Common myeloid progenitor, CD34-positive (primary cell): ENCODE measurements at regions of chr3 and their contacts with region 1.

Region 1: GRCh38 chr3:112111785-112112402 is 21.2 kb downstream of the GCSAM start:
- DNase-seq: peak; percentile 73 to 86 (median 84)
- H3K4me3 ChIP-seq: no peak overlapping the region
- H3K27ac ChIP-seq: no peak overlapping the region
- H3K4me1 ChIP-seq: peaks cover under 1 to 4% (median 3%) of the 10 kb centered on the region in 4 experiments
- H3K27me3 ChIP-seq: no peaks in the 10 kb centered on the region

Region 2: DNA sequence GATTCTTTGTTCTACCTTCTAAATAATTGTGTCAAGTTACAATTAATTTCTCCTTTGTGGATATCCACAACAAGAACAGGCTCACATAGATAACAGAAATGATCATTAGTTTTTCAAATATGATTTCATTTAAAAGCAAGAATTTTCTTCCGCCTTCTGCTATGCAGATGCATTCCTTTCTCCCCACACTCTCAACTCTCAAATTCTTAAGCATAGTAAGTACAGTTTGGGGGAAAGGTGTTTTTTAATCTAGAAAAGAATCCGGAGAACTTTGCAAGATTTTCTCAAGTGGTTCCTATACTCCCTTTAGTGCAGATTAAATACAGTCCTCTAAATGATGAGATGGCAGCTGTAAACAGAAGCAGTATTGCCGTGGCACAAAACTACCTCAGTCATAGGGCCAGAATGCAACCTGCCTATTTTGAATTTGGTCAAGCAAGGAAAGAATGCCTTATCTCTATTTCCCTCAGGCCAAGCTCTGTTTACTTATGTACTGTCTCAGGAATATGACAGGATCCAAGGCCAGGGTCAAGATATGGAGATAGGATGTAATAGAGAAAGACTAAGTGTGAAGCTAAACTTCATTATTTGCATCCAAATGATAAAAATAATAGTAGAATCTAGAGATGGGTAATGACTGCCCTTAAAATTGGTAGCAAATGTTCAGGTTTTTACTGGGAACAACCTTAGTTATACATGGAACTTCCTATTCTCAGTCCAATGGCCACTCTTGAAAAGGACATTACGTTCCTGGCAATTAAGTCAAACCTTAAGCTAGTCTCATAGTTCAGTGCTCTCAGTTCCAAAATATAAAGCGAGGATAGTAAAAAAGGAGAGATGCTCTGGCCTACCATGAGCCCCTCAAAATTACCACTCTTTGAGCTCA is 330.1 kb before region 1 on chr3:
- CTCF ChIA-PET with region 1: no interaction called
- POLR2A ChIA-PET with region 1: no interaction called
- DNase-seq: no peak
- H3K4me3 ChIP-seq: no peak overlapping the region
- H3K27ac ChIP-seq: no peak overlapping the region
- H3K4me1 ChIP-seq: no peaks in the 10 kb centered on the region
- H3K27me3 ChIP-seq: no peaks in the 10 kb centered on the region

Region 3: GRCh38 chr3:112013058-112013783 is 98.7 kb before region 1 on chr3:
- CTCF ChIA-PET with region 1: no interaction called
- POLR2A ChIA-PET with region 1: no interaction called
- DNase-seq: peak; percentile 65 to 79 (median 74)
- H3K4me3 ChIP-seq: peak overlapping the region in 2 of 7 experiments; percentile 8 to 26
- H3K27ac ChIP-seq: no peak overlapping the region
- H3K4me1 ChIP-seq: peaks cover 0 to 10% (median 2%) of the 10 kb centered on the region in 4 experiments
- H3K27me3 ChIP-seq: no peaks in the 10 kb centered on the region

Region 4: GRCh38 chr3:112128843-112129727 is 17.2 kb after region 1 on chr3:
- CTCF ChIA-PET with region 1: interaction called, 10 read pairs
- POLR2A ChIA-PET with region 1: no interaction called
- DNase-seq: peak; percentile 68 to 95 (median 94)
- H3K4me3 ChIP-seq: peak overlapping the region in 1 of 7 experiments; percentile 29
- H3K27ac ChIP-seq: peak overlapping the region; percentile 60 to 67
- H3K4me1 ChIP-seq: peaks cover 18 to 65% (median 51%) of the 10 kb centered on the region in 4 experiments
- H3K27me3 ChIP-seq: no peaks in the 10 kb centered on the region

Region 5: GRCh38 chr3:112293368-112294321 is 181.8 kb after region 1 on chr3 and contains the start of gene SLC9C1:
- CTCF ChIA-PET with region 1: interaction called, 10 read pairs
- POLR2A ChIA-PET with region 1: no interaction called
- DNase-seq: peak; percentile 80 to 89 (median 86)
- H3K4me3 ChIP-seq: peak within 1 kb of the TSS in 5 of 7 experiments; percentile 42 to 77 (median 55)
- H3K27ac ChIP-seq: peak within 1 kb of the TSS in 1 of 2 experiments; percentile 46
- H3K4me1 ChIP-seq: peaks cover 0 to 18% (median 10%) of the 10 kb centered on the region in 4 experiments
- H3K27me3 ChIP-seq: no peaks in the 10 kb centered on the region

Region 6: DNA sequence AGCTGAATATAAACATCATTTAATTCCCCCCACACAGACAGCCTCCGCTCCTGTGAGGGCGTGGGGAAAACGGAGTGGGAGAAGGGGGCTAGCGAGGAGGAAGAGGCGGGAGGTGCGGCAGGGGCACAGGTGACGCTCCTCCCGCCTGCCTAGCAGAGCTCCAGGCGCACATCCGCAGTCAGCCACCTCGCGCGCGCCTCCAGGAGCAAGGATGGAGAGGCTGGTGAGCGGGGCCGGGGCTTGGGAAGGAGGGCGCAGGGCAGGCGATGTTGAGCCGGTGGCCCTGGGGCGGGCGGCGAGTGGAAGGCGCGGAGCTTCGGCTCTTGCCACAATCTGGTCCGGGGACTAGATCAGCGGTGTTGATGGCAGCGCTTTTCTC is 221.1 kb after region 1 on chr3 and contains the start of gene CD200:
- CTCF ChIA-PET with region 1: interaction called, 11 read pairs
- POLR2A ChIA-PET with region 1: no interaction called
- DNase-seq: peak; percentile 47 to 66 (median 51)
- H3K4me3 ChIP-seq: peak within 1 kb of the TSS; percentile 78 to 99 (median 90)
- H3K27ac ChIP-seq: peak within 1 kb of the TSS; percentile 74 to 82
- H3K4me1 ChIP-seq: peaks cover 11 to 38% (median 21%) of the 10 kb centered on the region in 4 experiments
- H3K27me3 ChIP-seq: no peaks in the 10 kb centered on the region

Region 7: GRCh38 chr3:112531358-112531781 is 419.5 kb after region 1 on chr3:
- CTCF ChIA-PET with region 1: interaction called, 17 read pairs
- POLR2A ChIA-PET with region 1: no interaction called
- DNase-seq: peak; percentile 55 to 79 (median 69)
- H3K4me3 ChIP-seq: no peak overlapping the region
- H3K27ac ChIP-seq: no peak overlapping the region
- H3K4me1 ChIP-seq: no peaks in the 10 kb centered on the region
- H3K27me3 ChIP-seq: no peaks in the 10 kb centered on the region